Activated CD4-positive, alpha-beta T cell treated with anti-CD3 and anti-CD28 coated beads for 36 hours (primary cell): ENCODE measurements at regions of chr15 and their contacts with region 1.

Region 1: DNA sequence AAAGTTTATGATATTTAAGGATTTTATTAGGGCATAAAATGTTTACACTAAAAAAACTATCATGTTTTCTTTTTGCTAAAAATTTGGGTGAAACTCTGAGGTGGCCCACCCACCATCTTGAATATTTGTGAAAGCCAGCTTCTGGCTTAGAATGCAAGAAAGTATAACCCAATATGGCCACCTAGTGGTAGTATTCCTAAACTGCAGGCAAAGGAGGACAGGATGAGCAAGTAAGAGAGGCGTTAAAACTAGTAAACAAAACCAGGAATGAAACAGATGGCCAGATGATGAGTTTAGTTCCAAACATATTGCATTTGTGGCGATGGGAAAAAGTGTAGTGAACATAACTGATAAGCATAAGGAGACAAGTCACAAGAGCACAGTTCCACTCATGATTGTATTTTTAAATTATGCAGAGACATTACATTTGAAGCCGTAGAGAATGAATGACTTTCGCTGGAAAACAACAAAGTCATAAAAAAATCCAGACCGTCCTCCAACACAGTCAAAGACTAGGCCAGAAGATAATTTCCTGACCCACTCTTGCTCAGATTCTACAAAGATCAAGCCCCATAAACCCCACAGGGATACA is 103.3 kb upstream of the PRTG start:
- DNase-seq: peak; percentile 52
- ATAC-seq: peak; percentile 66
- H3K4me3 Mint-ChIP-seq: no peak overlapping the region
- H3K27ac Mint-ChIP-seq: no peak overlapping the region
- H3K4me1 Mint-ChIP-seq: no peaks in the 10 kb centered on the region
- H3K27me3 Mint-ChIP-seq: no peaks in the 10 kb centered on the region

Region 2: GRCh38 chr15:55829826-55830225 is 16.4 kb before region 1 on chr15:
- CTCF ChIA-PET with region 1: interaction called, 11 read pairs
- POLR2A ChIA-PET with region 1: no interaction called
- intact Hi-C with region 1: no loop called
- DNase-seq: peak; percentile 9
- ATAC-seq: peak; percentile 91
- H3K4me3 Mint-ChIP-seq: no peak overlapping the region
- H3K27ac Mint-ChIP-seq: peak overlapping the region; percentile 62
- H3K4me1 Mint-ChIP-seq: peaks cover 14% of the 10 kb centered on the region
- H3K27me3 Mint-ChIP-seq: no peaks in the 10 kb centered on the region

Region 3: GRCh38 chr15:55884223-55884622 is 38.0 kb after region 1 on chr15:
- CTCF ChIA-PET with region 1: no interaction called
- POLR2A ChIA-PET with region 1: no interaction called
- intact Hi-C with region 1: no loop called
- DNase-seq: no peak
- ATAC-seq: no peak
- H3K4me3 Mint-ChIP-seq: no peak overlapping the region
- H3K27ac Mint-ChIP-seq: no peak overlapping the region
- H3K4me1 Mint-ChIP-seq: no peaks in the 10 kb centered on the region
- H3K27me3 Mint-ChIP-seq: no peaks in the 10 kb centered on the region

Region 4: GRCh38 chr15:55928955-55929354 is 82.7 kb after region 1 on chr15:
- CTCF ChIA-PET with region 1: no interaction called
- POLR2A ChIA-PET with region 1: interaction called, 10 read pairs
- intact Hi-C with region 1: no loop called
- DNase-seq: no peak
- ATAC-seq: no peak
- H3K4me3 Mint-ChIP-seq: no peak overlapping the region
- H3K27ac Mint-ChIP-seq: no peak overlapping the region
- H3K4me1 Mint-ChIP-seq: no peaks in the 10 kb centered on the region
- H3K27me3 Mint-ChIP-seq: no peaks in the 10 kb centered on the region